ENCODE measurements at regions of chr14 and their contacts with region 1.

Region 1: DNA sequence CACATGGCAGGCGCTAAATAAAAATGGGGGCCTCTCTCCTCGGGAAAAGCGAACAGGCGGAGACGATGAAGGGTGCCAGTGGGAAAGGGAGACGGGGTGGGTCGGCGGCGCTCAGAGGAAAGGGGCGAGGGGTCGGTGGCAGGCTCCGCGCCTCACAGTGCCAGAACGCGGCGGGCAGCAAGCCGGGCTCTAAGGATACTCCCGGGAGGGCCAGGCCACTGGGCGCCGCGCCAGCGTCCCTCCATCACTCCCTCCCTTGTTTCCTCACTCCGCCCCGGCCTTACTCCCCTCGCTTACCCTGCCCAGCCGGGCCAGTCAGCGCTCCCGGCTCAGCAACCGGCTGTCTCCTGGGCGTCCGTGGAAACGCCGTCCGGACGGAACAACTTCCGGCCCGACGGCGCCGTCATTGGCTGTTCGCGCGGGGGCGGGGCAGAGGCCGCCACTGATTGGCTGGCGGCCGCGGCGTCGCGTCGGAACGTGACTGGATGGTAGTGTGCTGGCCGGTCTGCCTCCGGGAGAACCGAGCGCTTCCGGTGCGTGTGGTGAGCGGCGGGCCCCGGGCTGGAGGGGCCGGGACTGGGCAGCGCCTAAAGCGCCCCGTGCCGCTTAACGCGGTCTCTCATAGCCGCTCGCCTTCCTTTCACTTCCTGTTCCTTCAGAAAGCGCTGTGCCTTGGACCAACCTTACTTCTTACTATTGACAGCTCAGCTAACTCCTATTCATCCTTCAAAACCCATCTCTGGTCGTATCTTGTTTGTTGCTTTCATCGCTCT is 53.0 kb downstream of the SLC25A47 start:
- DNase-seq: peak; percentile 94 to 95
- ATAC-seq: peak; percentile 93 to 97 (median 94)
- H3K4me3 ChIP-seq: peak within 1 kb of the TSS; percentile 33 to 95 (median 74)
- H3K27ac ChIP-seq: peak within 1 kb of the TSS; percentile 61 to 99 (median 96)
- H3K4me1 ChIP-seq: peaks cover 6 to 54% (median 23%) of the 10 kb centered on the region in 9 donors
- H3K27me3 ChIP-seq: no peaks in the 10 kb centered on the region
- CTCF ChIP-seq: no peak

Region 2: GRCh38 chr14:100239840-100240724 is 136.1 kb before region 1 on chr14:
- intact Hi-C with region 1: loop called in 4 of 10 experiments (anchors 1 to 10 kb)
- DNase-seq: peak; percentile 86 to 88
- ATAC-seq: peak; percentile 51 to 83 (median 74)
- H3K4me3 ChIP-seq: peak overlapping the region; percentile 91 to 100 (median 99)
- H3K27ac ChIP-seq: peak overlapping the region; percentile 91 to 100 (median 99)
- H3K4me1 ChIP-seq: peaks cover 15 to 69% (median 57%) of the 10 kb centered on the region in 9 donors
- H3K27me3 ChIP-seq: no peaks in the 10 kb centered on the region
- CTCF ChIP-seq: peak; percentile 56 to 85 (median 68)

Region 3: GRCh38 chr14:100278702-100279101 is 97.4 kb before region 1 on chr14:
- intact Hi-C with region 1: loop called in 1 of 10 experiments (anchors 5 kb)
- DNase-seq: no peak
- ATAC-seq: peak in 4 of 8 donors; percentile 20 to 66 (median 26)
- H3K4me3 ChIP-seq: no peak overlapping the region
- H3K27ac ChIP-seq: no peak overlapping the region
- H3K4me1 ChIP-seq: peaks cover 0 to 64% (median 18%) of the 10 kb centered on the region in 9 donors
- H3K27me3 ChIP-seq: no peaks in the 10 kb centered on the region
- CTCF ChIP-seq: peak in 4 of 9 donors; percentile 12 to 28 (median 20)

Region 4: GRCh38 chr14:100306420-100307219 is 69.5 kb before region 1 on chr14 and contains the start of gene SLC25A29:
- intact Hi-C with region 1: loop called in 9 of 10 experiments (anchors 2 to 10 kb)
- DNase-seq: peak; percentile 88 to 90
- ATAC-seq: peak; percentile 87 to 94 (median 90)
- H3K4me3 ChIP-seq: peak within 1 kb of the TSS; percentile 65 to 99 (median 92)
- H3K27ac ChIP-seq: peak within 1 kb of the TSS; percentile 84 to 95 (median 90)
- H3K4me1 ChIP-seq: peaks cover 4 to 69% (median 45%) of the 10 kb centered on the region in 9 donors
- H3K27me3 ChIP-seq: no peaks in the 10 kb centered on the region
- CTCF ChIP-seq: no peak
- total RNA-seq, gene SLC25A29: 11.0 to 25.3 (median 21.7) TPM